ENCODE measurements at regions of chr11 and their contacts with region 1.

Region 1: GRCh38 chr11:33257897-33258630 is 883 bp downstream of the HIPK3 start:
- DNase-seq: no peak
- ATAC-seq: peak; percentile 62
- H3K4me3 ChIP-seq: peak overlapping the region; percentile 76
- H3K27ac ChIP-seq: peak overlapping the region; percentile 98
- H3K4me1 ChIP-seq: peaks cover 5% of the 10 kb centered on the region; the same call in 1 of the 2 replicates
- H3K27me3 ChIP-seq: no peaks in the 10 kb centered on the region
- CTCF ChIP-seq: peak; percentile 16 to 38 (median 17); a peak in 2 of 6 replicates
- EP300 ChIP-seq: no peak
- POLR2A ChIP-seq: peak; percentile 86
- RAD21 ChIP-seq: no peak

Region 2: GRCh38 chr11:33273656-33274055 is 15.6 kb after region 1 on chr11:
- CTCF ChIA-PET with region 1: interaction called, 4 read pairs
- POLR2A ChIA-PET with region 1: interaction called, 11 read pairs
- RAD21 ChIA-PET with region 1: interaction called, 3 read pairs
- SMC1A ChIA-PET with region 1: interaction called, 8 read pairs
- in situ Hi-C with region 1: no loop called
- intact Hi-C with region 1: no loop called
- DNase-seq: no peak
- ATAC-seq: peak; percentile 52
- H3K4me3 ChIP-seq: no peak overlapping the region
- H3K27ac ChIP-seq: no peak overlapping the region
- H3K4me1 ChIP-seq: no peaks in the 10 kb centered on the region
- H3K27me3 ChIP-seq: no peaks in the 10 kb centered on the region
- CTCF ChIP-seq: no peak
- EP300 ChIP-seq: no peak
- POLR2A ChIP-seq: no peak
- RAD21 ChIP-seq: no peak

Region 3: GRCh38 chr11:33291004-33291777 is 33.1 kb after region 1 on chr11:
- CTCF ChIA-PET with region 1: no interaction called
- POLR2A ChIA-PET with region 1: interaction called, 3 read pairs
- RAD21 ChIA-PET with region 1: interaction called, 3 read pairs
- SMC1A ChIA-PET with region 1: interaction called, 13 read pairs
- in situ Hi-C with region 1: no loop called
- intact Hi-C with region 1: no loop called
- DNase-seq: peak; percentile 64
- ATAC-seq: peak; percentile 93
- H3K4me3 ChIP-seq: no peak overlapping the region
- H3K27ac ChIP-seq: peak overlapping the region; percentile 17; the same call in 1 of the 2 replicates
- H3K4me1 ChIP-seq: no peaks in the 10 kb centered on the region; the same call in 1 of the 2 replicates
- H3K27me3 ChIP-seq: no peaks in the 10 kb centered on the region
- CTCF ChIP-seq: no peak
- EP300 ChIP-seq: peak; percentile 23 to 41; a peak in 2 of 4 replicates
- POLR2A ChIP-seq: no peak
- RAD21 ChIP-seq: no peak

Region 4: DNA sequence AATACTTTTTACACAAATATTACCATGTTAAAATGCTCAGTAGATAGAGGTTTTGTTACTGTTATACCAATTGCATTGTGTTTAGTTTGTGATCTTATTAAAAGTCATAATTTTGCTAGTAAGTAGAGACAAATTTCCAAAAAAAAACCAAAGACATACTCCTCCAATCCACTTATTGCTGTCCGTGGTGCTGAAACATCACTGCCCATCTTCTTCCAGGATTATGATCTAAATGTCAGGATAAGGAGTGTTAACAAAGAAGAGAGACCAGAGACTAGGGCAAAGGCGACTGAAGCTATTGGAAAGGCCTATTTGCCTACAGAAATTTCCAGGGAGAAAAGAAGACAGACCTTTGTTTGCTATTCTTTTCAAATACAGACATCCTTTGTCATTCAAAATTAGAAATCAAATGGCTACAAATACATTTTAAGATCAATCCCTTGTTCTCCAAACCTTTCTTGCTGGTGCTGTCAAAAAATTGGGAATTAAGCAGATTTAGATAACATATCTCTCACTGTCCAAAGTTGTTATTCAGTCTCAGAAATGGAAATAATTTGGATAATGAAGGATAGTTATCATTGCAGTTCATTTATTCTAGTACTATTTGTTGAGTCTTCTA is 242.9 kb after region 1 on chr11:
- CTCF ChIA-PET with region 1: no interaction called
- POLR2A ChIA-PET with region 1: no interaction called
- RAD21 ChIA-PET with region 1: no interaction called
- SMC1A ChIA-PET with region 1: no interaction called
- in situ Hi-C with region 1: no loop called
- intact Hi-C with region 1: no loop called
- DNase-seq: no peak
- ATAC-seq: no peak
- H3K4me3 ChIP-seq: no peak overlapping the region
- H3K27ac ChIP-seq: no peak overlapping the region
- H3K4me1 ChIP-seq: no peaks in the 10 kb centered on the region
- H3K27me3 ChIP-seq: no peaks in the 10 kb centered on the region; a peak in 1 of 4 replicates
- CTCF ChIP-seq: no peak
- EP300 ChIP-seq: no peak
- POLR2A ChIP-seq: no peak
- RAD21 ChIP-seq: no peak

Measured in GM12878 (cell line).